Common myeloid progenitor, CD34-positive (primary cell): ENCODE measurements at regions of chr22 and their contacts with region 1.

Region 1: GRCh38 chr22:31230871-31231621 is 18.9 kb downstream of the LIMK2 start:
- DNase-seq: peak; percentile 84 to 97 (median 95)
- H3K4me3 ChIP-seq: peak overlapping the region in 3 of 7 experiments; percentile 33 to 66 (median 35)
- H3K27ac ChIP-seq: peak overlapping the region; percentile 61 to 82
- H3K4me1 ChIP-seq: peaks cover 50 to 88% (median 78%) of the 10 kb centered on the region in 4 experiments
- H3K27me3 ChIP-seq: no peaks in the 10 kb centered on the region

Region 2: GRCh38 chr22:31107178-31107893 is 123.7 kb before region 1 on chr22 and contains the start of gene SELENOM:
- CTCF ChIA-PET with region 1: interaction called, 16 read pairs
- POLR2A ChIA-PET with region 1: no interaction called
- DNase-seq: peak; percentile 85 to 92 (median 92)
- H3K4me3 ChIP-seq: peak within 1 kb of the TSS; percentile 21 to 79 (median 68)
- H3K27ac ChIP-seq: no peak within 1 kb of the TSS
- H3K4me1 ChIP-seq: peaks cover 0 to 16% (median 9%) of the 10 kb centered on the region in 4 experiments
- H3K27me3 ChIP-seq: peaks cover 0 to 4% (median 0%) of the 10 kb centered on the region in 5 experiments

Region 3: DNA sequence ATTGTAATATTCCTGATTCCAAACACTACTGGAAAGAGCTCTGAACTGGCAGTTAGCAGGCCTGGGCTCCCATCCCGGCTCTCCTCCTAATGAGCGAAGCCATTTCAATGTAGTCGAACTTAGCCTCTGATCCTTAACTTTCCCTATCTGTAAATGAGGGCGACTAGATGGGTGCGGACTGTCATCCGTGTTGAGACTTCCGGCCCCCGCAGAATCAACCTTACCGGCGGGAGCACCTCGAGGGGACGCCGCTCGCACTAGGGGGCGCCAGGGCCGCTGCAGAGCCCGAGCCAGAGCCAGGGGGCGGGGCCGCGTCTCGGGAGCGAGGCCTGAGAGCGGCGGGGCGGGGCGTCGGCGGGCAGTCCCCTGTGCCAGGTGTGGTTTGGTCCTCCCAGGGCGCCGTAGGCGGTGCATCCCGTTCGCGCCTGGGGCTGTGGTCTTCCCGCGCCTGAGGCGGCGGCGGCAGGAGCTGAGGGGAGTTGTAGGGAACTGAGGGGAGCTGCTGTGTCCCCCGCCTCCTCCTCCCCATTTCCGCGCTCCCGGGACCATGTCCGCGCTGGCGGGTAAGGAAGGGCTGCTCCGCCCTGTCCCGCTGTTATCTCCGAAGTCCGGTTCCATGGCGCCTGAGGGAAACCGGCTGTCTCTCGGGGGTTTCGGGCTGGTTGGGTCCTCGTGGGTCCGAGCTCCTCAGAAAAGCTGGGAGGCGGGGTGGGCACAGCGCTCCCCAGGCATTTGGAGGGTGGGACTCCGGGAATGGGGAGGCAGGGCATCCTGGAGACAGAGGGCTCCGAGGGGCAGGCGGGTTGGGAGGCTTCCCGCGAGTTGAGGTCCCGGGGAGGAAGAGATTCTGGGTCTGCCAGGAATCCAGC is 18.9 kb before region 1 on chr22 and contains the start of gene LIMK2:
- CTCF ChIA-PET with region 1: interaction called, 242 read pairs
- POLR2A ChIA-PET with region 1: interaction called, 11 read pairs
- DNase-seq: peak; percentile 90 to 93 (median 93)
- H3K4me3 ChIP-seq: peak within 1 kb of the TSS; percentile 77 to 96 (median 94)
- H3K27ac ChIP-seq: peak within 1 kb of the TSS; percentile 55 to 79
- H3K4me1 ChIP-seq: peaks cover 19 to 52% (median 41%) of the 10 kb centered on the region in 4 experiments
- H3K27me3 ChIP-seq: no peaks in the 10 kb centered on the region

Region 4: DNA sequence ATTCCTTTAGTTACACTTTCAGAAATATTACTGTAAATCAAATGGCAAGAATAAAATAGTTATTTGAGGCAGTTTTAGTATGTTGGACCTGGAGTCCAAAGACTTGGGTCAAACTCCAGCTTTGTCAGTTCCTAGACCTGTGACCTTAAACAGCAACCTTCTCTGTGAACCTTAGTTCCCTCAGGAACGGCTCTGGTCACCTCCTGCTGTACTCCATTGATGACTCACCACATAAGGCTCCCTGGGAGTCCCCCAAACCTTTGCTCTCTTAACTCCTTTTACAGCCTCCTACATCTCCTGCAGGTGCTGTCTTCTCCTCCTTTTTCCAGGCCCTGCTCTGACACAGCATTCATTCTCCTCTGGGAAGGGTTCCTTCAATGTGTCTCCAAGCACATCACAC is 10.2 kb after region 1 on chr22:
- CTCF ChIA-PET with region 1: interaction called, 21 read pairs
- POLR2A ChIA-PET with region 1: no interaction called
- DNase-seq: no peak
- H3K4me3 ChIP-seq: no peak overlapping the region
- H3K27ac ChIP-seq: no peak overlapping the region
- H3K4me1 ChIP-seq: peaks cover 0 to 22% (median 10%) of the 10 kb centered on the region in 4 experiments
- H3K27me3 ChIP-seq: no peaks in the 10 kb centered on the region

Region 5: DNA sequence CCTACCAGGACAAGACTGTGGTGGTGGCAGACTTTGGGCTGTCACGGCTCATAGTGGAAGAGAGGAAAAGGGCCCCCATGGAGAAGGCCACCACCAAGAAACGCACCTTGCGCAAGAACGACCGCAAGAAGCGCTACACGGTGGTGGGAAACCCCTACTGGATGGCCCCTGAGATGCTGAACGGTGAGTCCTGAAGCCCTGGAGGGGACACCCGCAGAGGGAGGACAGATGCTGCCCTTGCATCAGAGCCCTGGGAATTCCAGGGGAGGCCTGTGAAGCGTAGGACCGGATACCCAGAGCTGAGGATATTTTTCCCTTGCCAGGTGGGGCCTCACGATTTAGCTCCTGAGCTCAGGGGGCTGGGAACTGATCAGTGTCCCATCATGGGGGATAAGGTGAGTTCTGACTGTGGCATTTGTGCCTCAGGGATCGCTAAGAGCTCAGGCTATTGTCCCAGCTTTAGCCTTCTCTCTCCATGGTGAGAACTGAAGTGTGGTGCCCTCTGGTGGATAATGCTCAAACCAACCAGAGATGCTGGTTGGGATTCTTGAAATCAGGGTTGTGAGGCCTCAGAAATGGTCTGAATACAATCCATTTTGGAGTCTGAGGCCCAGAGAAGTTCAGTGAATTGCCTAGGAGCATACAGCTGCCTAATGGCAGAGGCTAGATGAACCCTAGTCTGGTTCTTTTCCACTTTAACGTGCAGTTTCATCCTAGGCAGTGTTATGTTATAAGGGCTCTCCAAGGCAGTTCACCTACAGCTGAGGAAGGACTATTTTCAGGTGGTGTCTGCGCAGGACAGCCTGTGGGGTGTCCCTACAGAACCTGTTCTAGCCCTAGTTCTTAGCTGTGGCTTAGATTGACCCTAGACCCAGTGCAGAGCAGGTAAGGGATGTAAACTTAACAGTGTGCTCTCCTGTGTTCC is 41.7 kb after region 1 on chr22:
- CTCF ChIA-PET with region 1: interaction called, 79 read pairs
- POLR2A ChIA-PET with region 1: interaction called, 4 read pairs
- DNase-seq: peak; percentile 51 to 73 (median 64)
- H3K4me3 ChIP-seq: no peak overlapping the region
- H3K27ac ChIP-seq: no peak overlapping the region
- H3K4me1 ChIP-seq: peaks cover 0 to 5% (median 5%) of the 10 kb centered on the region in 4 experiments
- H3K27me3 ChIP-seq: no peaks in the 10 kb centered on the region